CD8-positive, alpha-beta T cell (primary cell): ENCODE measurements at regions of chrX and their contacts with region 1.

Region 1: DNA sequence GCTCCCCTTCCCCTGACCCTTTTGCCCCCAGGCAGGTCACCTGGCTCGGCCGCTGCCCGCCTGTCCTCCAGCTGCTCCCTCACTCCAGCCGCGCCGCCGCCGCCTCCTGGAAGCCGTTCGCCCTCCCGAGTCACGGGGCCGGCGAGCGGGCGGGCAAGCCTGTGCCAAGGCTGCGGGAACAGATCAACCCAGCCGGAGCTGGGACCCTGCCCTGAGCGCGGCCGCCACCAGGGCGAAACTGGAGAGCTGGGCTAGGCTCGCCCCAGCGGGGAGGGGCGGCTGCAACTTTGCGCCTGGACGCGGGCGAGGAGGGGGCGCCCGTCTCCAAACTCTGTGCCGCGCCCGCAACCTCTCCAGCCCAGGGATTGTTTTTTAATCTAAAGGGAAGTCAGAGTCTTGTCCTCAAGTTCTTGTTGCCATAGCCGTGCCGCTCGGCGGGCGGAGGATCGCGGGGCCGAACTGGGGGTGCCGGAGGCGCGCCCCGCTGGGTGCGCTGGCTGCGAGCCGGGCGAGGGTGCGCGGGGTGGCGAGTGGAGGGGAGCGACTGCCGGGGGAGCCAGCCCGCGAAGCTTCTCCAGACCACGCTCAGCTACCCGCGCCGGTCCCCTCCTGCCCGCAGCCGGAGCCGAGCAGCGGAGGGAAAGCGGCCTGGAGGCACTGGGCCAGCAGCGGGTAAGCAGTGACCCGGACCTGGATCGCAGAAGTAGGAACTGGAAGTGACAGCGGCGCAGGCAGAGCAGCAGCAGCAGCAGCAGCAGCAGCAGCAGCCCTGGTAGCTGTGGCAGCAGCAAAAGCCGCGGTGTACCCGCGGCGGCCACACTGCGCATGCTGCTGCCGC is 13.4 kb downstream of the ARHGEF6 start:
- DNase-seq: peak in 8 of 9 experiments; percentile 16 to 71 (median 56)
- ATAC-seq: peak; percentile 71
- H3K4me3 ChIP-seq: peak overlapping the region; percentile 55 to 58
- H3K4me3 Mint-ChIP-seq: peak overlapping the region; percentile 82
- H3K27ac ChIP-seq: peak overlapping the region; percentile 15 to 25
- H3K27ac Mint-ChIP-seq: peak overlapping the region; percentile 87
- H3K4me1 ChIP-seq: peaks cover 61% of the 10 kb centered on the region
- H3K4me1 Mint-ChIP-seq: peaks cover 68% of the 10 kb centered on the region
- H3K27me3 ChIP-seq: no peaks in the 10 kb centered on the region
- H3K27me3 Mint-ChIP-seq: no peaks in the 10 kb centered on the region
- CTCF ChIP-seq: no peak

Region 2: DNA sequence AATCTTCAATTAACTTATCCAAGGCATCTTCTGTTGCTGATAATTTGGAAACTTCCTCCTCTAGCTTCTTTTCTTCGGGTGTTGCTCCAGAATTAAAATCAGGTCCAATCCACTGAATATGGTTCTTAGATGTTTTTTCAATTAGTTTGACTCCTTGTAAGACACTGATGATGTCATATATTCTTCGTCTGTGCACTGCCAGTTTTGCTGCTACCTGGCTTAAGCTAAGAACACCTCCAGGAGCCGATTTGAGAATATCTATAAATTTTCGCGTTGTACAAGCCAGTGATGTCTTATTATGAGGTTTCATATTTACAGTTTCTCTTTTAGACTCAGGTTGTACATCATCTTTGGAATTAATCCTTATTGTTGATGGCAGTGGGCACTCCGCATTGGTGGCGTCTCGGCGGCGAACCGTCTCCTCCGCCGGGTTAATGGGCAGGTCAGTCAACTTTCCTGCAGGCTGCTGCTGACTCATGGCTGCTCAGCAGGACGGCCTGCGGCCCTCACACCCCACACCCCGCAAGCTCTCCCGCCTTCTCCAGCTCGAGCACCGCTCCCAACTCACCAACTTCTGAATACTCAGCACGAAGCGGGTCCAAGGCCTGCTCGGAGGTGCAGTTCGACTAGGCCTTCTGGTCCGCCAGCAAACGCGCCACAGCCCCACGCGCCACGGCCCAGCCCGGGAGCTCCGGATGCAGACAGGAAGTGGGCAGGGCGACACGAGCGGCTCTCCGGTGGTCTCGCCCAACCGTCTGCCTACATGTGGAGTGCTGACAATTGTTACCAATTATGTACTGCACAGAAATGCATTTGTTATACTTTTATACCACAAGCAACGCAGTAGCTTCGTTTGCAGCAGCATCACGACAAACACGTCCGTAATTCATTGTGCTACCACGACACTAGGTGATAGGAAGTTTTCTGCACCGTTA is 669.2 kb before region 1 on chrX:
- CTCF ChIA-PET with region 1: no interaction called
- POLR2A ChIA-PET with region 1: no interaction called
- intact Hi-C with region 1: no loop called
- DNase-seq: no peak
- ATAC-seq: no peak
- H3K4me3 ChIP-seq: no peak overlapping the region
- H3K4me3 Mint-ChIP-seq: no peak overlapping the region
- H3K27ac ChIP-seq: no peak overlapping the region
- H3K27ac Mint-ChIP-seq: no peak overlapping the region
- H3K4me1 ChIP-seq: no peaks in the 10 kb centered on the region
- H3K4me1 Mint-ChIP-seq: no peaks in the 10 kb centered on the region
- H3K27me3 ChIP-seq: no peaks in the 10 kb centered on the region
- H3K27me3 Mint-ChIP-seq: no peaks in the 10 kb centered on the region
- CTCF ChIP-seq: no peak

Region 3: DNA sequence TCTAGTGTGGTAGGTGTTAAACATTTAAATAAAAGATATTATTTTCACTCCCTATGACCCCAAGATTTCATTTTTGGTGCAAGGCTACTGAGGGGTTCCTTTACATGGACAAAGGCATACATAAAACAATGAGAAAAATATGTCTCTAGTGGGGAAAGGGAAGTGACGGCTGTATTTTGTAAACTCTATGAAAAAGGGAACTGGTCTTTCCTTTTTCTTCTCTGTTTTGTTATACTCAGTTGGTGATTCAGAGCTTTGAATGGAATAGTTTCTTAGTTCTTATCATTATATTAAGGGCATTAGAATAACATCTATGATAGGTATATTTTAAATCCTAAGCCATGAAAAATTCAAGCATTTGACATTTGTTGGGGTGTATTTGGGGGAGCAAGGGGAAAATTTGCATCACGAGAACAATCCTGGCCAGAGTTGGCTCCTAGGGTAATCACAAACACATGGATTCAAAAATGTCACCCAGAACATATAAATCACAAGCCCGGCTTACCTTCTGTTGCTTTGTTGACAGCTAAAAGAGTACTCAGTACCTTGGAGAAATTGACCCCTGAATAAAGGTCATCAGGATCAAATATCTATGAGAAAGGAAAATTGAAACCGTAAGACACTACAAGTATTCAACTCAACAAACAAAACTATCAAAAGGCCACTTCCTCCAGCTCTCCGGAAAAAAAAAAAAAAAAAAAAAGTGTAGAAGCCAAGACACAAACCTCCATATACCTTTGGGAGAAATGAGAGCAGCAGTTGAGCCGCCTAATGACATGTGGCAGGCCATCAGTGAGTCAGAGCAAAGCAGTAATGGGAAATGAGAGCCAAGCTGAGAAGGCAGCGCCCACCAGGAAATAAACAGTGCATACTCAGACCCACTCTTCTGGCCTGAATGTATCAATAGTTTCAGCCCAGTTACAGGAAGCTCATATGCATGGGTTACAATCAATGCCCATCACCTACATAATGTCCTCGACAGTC is 20.0 kb before region 1 on chrX:
- CTCF ChIA-PET with region 1: no interaction called
- POLR2A ChIA-PET with region 1: no interaction called
- intact Hi-C with region 1: loop called in 1 of 2 experiments (anchors 2 kb)
- DNase-seq: peak in 1 of 9 experiments; percentile 6
- ATAC-seq: peak; percentile 61
- H3K4me3 ChIP-seq: no peak overlapping the region
- H3K4me3 Mint-ChIP-seq: peak overlapping the region; percentile 60
- H3K27ac ChIP-seq: no peak overlapping the region
- H3K27ac Mint-ChIP-seq: peak overlapping the region; percentile 83
- H3K4me1 ChIP-seq: peaks cover 32% of the 10 kb centered on the region
- H3K4me1 Mint-ChIP-seq: peaks cover 81% of the 10 kb centered on the region
- H3K27me3 ChIP-seq: no peaks in the 10 kb centered on the region
- H3K27me3 Mint-ChIP-seq: no peaks in the 10 kb centered on the region
- CTCF ChIP-seq: no peak

Region 4: DNA sequence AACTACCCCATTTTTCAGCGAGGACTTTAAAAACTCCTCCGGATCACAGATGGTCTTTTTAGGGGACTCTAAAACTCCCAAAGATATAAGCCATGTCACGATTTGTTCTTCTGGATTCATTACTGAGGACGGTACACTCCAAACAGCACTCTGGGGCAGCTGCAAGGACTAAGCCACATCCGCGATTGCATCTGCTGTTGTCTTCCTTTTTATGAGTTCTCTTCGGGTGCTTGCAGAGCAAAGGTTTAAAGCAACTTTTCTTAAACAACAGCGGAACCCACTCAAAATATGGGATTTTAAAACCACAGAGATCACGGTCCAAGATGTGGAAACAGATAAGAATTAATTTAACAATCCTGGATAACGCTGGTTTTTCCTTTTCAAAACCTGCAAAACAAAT is 13.4 kb after region 1 on chrX and contains the start of gene ARHGEF6:
- CTCF ChIA-PET with region 1: no interaction called
- POLR2A ChIA-PET with region 1: interaction called, 6 read pairs
- intact Hi-C with region 1: loop called (anchors 1 to 2 kb)
- DNase-seq: peak in 7 of 9 experiments; percentile 0 to 65 (median 36)
- ATAC-seq: peak; percentile 58
- H3K4me3 ChIP-seq: peak within 1 kb of the TSS; percentile 67
- H3K4me3 Mint-ChIP-seq: peak within 1 kb of the TSS; percentile 93
- H3K27ac ChIP-seq: peak within 1 kb of the TSS; percentile 60 to 80
- H3K27ac Mint-ChIP-seq: peak within 1 kb of the TSS; percentile 96
- H3K4me1 ChIP-seq: peaks cover 44% of the 10 kb centered on the region
- H3K4me1 Mint-ChIP-seq: peaks cover 68% of the 10 kb centered on the region
- H3K27me3 ChIP-seq: no peaks in the 10 kb centered on the region
- H3K27me3 Mint-ChIP-seq: no peaks in the 10 kb centered on the region
- CTCF ChIP-seq: no peak
- total RNA-seq, gene ARHGEF6: 32.2 to 33.2 TPM